Ovary (tissue), 10 donors: ENCODE measurements at regions of chr11 and their contacts with region 1.

Region 1: GRCh38 chr11:113305440-113306336 is 8.7 kb upstream of the TTC12 start:
- DNase-seq: peak; percentile 63 to 83 (median 77)
- H3K4me3 ChIP-seq: no peak overlapping the region
- H3K27ac ChIP-seq: no peak overlapping the region
- H3K4me1 ChIP-seq: no peaks in the 10 kb centered on the region
- H3K27me3 ChIP-seq: no peaks in the 10 kb centered on the region
- CTCF ChIP-seq: peak; percentile 70 to 77 (median 70)
- EP300 ChIP-seq: no peak
- POLR2A ChIP-seq: peak; percentile 17

Region 2: GRCh38 chr11:113249491-113249763 is 56.3 kb before region 1 on chr11:
- intact Hi-C with region 1: no loop called
- DNase-seq: no peak
- H3K4me3 ChIP-seq: no peak overlapping the region
- H3K27ac ChIP-seq: no peak overlapping the region
- H3K4me1 ChIP-seq: peaks cover 1% of the 10 kb centered on the region
- H3K27me3 ChIP-seq: no peaks in the 10 kb centered on the region
- CTCF ChIP-seq: no peak
- EP300 ChIP-seq: no peak
- POLR2A ChIP-seq: no peak

Region 3: DNA sequence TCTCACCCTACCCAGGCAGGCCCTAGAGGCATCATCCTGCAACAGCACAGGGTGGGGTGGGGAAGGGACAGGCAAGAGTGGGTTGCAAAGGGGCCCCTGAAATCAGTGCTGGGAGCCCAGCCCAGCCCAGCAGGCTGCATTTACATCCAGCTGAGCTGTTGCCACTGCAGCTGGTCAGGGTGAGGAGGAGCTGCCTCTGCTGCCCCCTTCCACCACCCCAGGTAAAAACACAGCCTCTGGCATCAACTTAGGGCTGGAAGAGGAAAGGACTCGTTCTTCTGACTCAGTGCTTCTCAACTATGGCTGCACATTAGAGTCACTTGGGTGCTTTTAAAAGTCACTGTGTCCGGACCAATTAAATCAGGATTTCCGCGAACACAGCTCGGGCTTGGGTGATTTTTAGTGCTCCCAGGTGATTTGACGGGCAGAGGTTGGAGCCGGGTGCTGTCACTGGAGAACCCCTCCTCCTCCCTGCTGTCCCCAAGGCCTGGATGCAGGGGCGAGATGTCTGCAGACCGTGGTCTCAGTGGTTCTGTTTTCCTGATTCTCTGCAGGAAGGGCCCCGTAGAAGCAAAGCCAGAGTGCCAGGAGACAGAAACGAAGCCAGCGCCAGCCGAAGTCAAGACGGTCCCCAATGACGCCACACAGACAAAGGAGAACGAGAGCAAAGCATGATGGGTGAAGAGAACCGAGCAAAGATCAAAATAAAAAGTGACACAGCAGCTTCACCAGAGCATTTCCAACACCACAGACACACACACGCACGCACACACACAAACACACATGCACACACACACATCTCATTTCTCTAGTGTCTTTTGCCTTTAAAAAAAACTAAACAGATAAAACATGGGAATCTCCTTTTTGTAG is 30.7 kb before region 1 on chr11:
- intact Hi-C with region 1: no loop called
- DNase-seq: no peak
- H3K4me3 ChIP-seq: no peak overlapping the region
- H3K27ac ChIP-seq: no peak overlapping the region
- H3K4me1 ChIP-seq: no peaks in the 10 kb centered on the region
- H3K27me3 ChIP-seq: no peaks in the 10 kb centered on the region
- CTCF ChIP-seq: no peak
- EP300 ChIP-seq: no peak
- POLR2A ChIP-seq: no peak

Region 4: GRCh38 chr11:113532697-113533424 is 227.2 kb after region 1 on chr11:
- intact Hi-C with region 1: loop called in 3 of 4 experiments (anchors 5 to 10 kb)
- DNase-seq: peak; percentile 50 to 77 (median 74)
- H3K4me3 ChIP-seq: no peak overlapping the region
- H3K27ac ChIP-seq: no peak overlapping the region
- H3K4me1 ChIP-seq: no peaks in the 10 kb centered on the region
- H3K27me3 ChIP-seq: no peaks in the 10 kb centered on the region
- CTCF ChIP-seq: peak in 1 of 3 donors; percentile 40
- EP300 ChIP-seq: no peak
- POLR2A ChIP-seq: no peak

Region 5: GRCh38 chr11:113730887-113731726 is 425.4 kb after region 1 on chr11:
- intact Hi-C with region 1: loop called in 3 of 4 experiments (anchors 5 to 10 kb)
- DNase-seq: peak in 2 of 5 donors; percentile 11 to 20
- H3K4me3 ChIP-seq: no peak overlapping the region
- H3K27ac ChIP-seq: no peak overlapping the region
- H3K4me1 ChIP-seq: peaks cover 1% of the 10 kb centered on the region
- H3K27me3 ChIP-seq: no peaks in the 10 kb centered on the region
- CTCF ChIP-seq: peak in 1 of 3 donors; percentile 30
- EP300 ChIP-seq: no peak
- POLR2A ChIP-seq: no peak

Region 6: DNA sequence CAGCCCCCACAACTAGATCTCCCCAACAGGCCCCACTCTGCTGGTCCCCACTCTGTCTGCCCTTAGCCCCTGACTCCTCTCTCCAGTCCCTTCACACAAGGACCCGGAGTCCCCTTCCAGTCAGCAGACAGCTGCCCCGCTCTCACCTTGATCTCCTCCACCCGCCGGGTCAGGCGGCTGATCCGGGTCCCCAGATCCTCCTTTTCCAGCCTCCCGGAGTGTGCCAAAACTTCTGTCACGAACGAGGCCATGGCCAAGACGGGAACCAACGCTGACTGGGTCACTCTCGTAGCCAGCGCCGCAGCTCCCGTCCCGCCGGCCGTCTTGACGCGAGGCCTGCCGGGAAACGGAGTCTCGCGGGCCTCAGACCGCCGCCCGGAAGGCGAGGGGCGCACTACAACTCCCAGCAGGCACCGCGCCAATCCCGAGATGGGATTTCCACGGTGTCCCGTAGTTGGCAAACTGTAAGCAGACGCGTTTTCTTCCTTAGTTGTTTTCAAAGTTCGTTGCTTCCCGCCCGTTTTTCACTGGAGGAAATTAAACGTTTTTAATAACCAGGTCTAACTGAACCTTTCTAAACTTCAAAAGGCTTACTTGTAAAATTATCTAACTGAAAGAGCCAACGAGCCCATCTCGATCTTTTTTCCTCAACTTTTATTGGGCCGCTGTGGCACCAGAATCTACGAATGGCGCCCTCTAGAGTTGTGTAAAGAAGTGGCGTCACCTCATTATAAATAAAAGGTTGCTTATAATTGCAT is 467.9 kb after region 1 on chr11 and contains the start of gene ZW10:
- intact Hi-C with region 1: loop called in 2 of 4 experiments (anchors 5 to 10 kb)
- DNase-seq: peak; percentile 96 to 99 (median 97)
- H3K4me3 ChIP-seq: peak within 1 kb of the TSS; percentile 83
- H3K27ac ChIP-seq: peak within 1 kb of the TSS in 1 of 2 donors; percentile 62
- H3K4me1 ChIP-seq: peaks cover 6% of the 10 kb centered on the region
- H3K27me3 ChIP-seq: no peaks in the 10 kb centered on the region
- CTCF ChIP-seq: peak; percentile 78 to 81 (median 80)
- EP300 ChIP-seq: no peak
- POLR2A ChIP-seq: no peak
- total RNA-seq, gene ZW10: 8.9 to 12.6 (median 11.7) TPM

Region 7: GRCh38 chr11:113796663-113797259 is 491.1 kb after region 1 on chr11:
- intact Hi-C with region 1: loop called in 2 of 4 experiments (anchors 10 kb)
- DNase-seq: no peak
- H3K4me3 ChIP-seq: no peak overlapping the region
- H3K27ac ChIP-seq: no peak overlapping the region
- H3K4me1 ChIP-seq: no peaks in the 10 kb centered on the region
- H3K27me3 ChIP-seq: no peaks in the 10 kb centered on the region
- CTCF ChIP-seq: peak in 2 of 3 donors; percentile 28 to 33
- EP300 ChIP-seq: no peak
- POLR2A ChIP-seq: no peak